Mammary epithelial cell (primary cell): ENCODE measurements at regions of chr12 and their contacts with region 1.

Region 1: GRCh38 chr12:78120866-78121560 is 290.3 kb downstream of the NAV3 start:
- DNase-seq: no peak
- H3K4me3 ChIP-seq: no peak overlapping the region
- H3K27ac ChIP-seq: no peak overlapping the region
- H3K4me1 ChIP-seq: no peaks in the 10 kb centered on the region
- H3K27me3 ChIP-seq: no peaks in the 10 kb centered on the region
- CTCF ChIP-seq: peak in 1 of 2 donors; percentile 41

Region 2: GRCh38 chr12:77995436-77996167 is 125.4 kb before region 1 on chr12:
- CTCF ChIA-PET with region 1: no interaction called
- dilution Hi-C with region 1: no loop called
- in situ Hi-C with region 1: loop called (anchors 10 to 25 kb)
- intact Hi-C with region 1: loop called (anchors 1 kb)
- DNase-seq: peak; percentile 90
- H3K4me3 ChIP-seq: no peak overlapping the region
- H3K27ac ChIP-seq: no peak overlapping the region
- H3K4me1 ChIP-seq: peaks cover 14% of the 10 kb centered on the region
- H3K27me3 ChIP-seq: no peaks in the 10 kb centered on the region
- CTCF ChIP-seq: no peak

Region 3: DNA sequence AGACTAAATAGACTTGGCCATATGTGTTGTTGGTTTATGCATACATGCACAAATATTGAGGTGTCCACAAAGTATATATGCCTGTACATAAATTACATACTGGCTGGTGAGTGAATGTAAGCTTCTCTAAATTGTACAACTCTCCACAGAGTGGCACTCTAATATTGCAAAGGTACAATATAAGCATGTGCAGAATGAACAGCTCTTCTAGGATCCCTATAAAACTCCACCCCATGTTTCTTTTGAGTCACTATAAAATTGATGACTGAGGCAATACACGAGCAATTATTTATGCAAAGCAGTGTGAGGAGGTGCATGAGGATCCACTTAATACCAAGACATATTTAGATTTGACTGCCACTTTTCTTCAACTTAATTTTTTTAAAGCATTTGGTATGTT is 118.1 kb before region 1 on chr12:
- CTCF ChIA-PET with region 1: no interaction called
- dilution Hi-C with region 1: loop called (anchors 5 kb)
- in situ Hi-C with region 1: loop called (anchors 10 to 25 kb)
- intact Hi-C with region 1: loop called (anchors 1 kb)
- DNase-seq: no peak
- H3K4me3 ChIP-seq: no peak overlapping the region
- H3K27ac ChIP-seq: no peak overlapping the region
- H3K4me1 ChIP-seq: no peaks in the 10 kb centered on the region
- H3K27me3 ChIP-seq: no peaks in the 10 kb centered on the region
- CTCF ChIP-seq: peak in 1 of 2 donors; percentile 14

Region 4: GRCh38 chr12:78088391-78088832 is 32.6 kb before region 1 on chr12:
- CTCF ChIA-PET with region 1: no interaction called
- dilution Hi-C with region 1: no loop called
- in situ Hi-C with region 1: no loop called
- intact Hi-C with region 1: no loop called
- DNase-seq: no peak
- H3K4me3 ChIP-seq: no peak overlapping the region
- H3K27ac ChIP-seq: no peak overlapping the region
- H3K4me1 ChIP-seq: no peaks in the 10 kb centered on the region
- H3K27me3 ChIP-seq: no peaks in the 10 kb centered on the region
- CTCF ChIP-seq: no peak

Region 5: GRCh38 chr12:78338054-78338785 is 217.2 kb after region 1 on chr12:
- CTCF ChIA-PET with region 1: no interaction called
- dilution Hi-C with region 1: no loop called
- in situ Hi-C with region 1: no loop called
- intact Hi-C with region 1: no loop called
- DNase-seq: no peak
- H3K4me3 ChIP-seq: no peak overlapping the region
- H3K27ac ChIP-seq: no peak overlapping the region
- H3K4me1 ChIP-seq: no peaks in the 10 kb centered on the region
- H3K27me3 ChIP-seq: peaks cover 3% of the 10 kb centered on the region
- CTCF ChIP-seq: no peak